K562 (cell line): ENCODE measurements at regions of chr2 and their contacts with region 1.

Region 1: GRCh38 chr2:70062268-70062667 is 25.0 kb upstream of the PCBP1 start:
- DNase-seq: no peak
- ATAC-seq: peak; percentile 64
- H3K4me3 ChIP-seq: no peak overlapping the region
- H3K27ac ChIP-seq: no peak overlapping the region
- H3K4me1 ChIP-seq: peaks cover 0 to 6% of the 10 kb centered on the region in 2 experiments; a peak in 2 of 5 replicates
- H3K27me3 ChIP-seq: no peaks in the 10 kb centered on the region
- CTCF ChIP-seq: peak in 2 of 3 experiments; percentile 22 to 53; a peak in 2 of 6 replicates
- EP300 ChIP-seq: no peak
- POLR2A ChIP-seq: no peak
- RAD21 ChIP-seq: peak; percentile 39 to 58

Region 2: GRCh38 chr2:70043252-70043875 is 18.9 kb before region 1 on chr2:
- CTCF ChIA-PET with region 1: no interaction called
- POLR2A ChIA-PET with region 1: interaction called, 10 read pairs
- in situ Hi-C with region 1: no loop called
- intact Hi-C with region 1: no loop called
- DNase-seq: no peak
- ATAC-seq: no peak
- H3K4me3 ChIP-seq: no peak overlapping the region
- H3K27ac ChIP-seq: no peak overlapping the region
- H3K4me1 ChIP-seq: peaks cover 1 to 4% of the 10 kb centered on the region in 2 experiments
- H3K27me3 ChIP-seq: no peaks in the 10 kb centered on the region
- CTCF ChIP-seq: no peak
- EP300 ChIP-seq: no peak
- POLR2A ChIP-seq: no peak
- RAD21 ChIP-seq: no peak